ENCODE measurements at regions of chr7 and their contacts with region 1.

Region 1: GRCh38 chr7:86926732-86927131 is 132.7 kb downstream of the ELAPOR2 start:
- DNase-seq: peak; percentile 24
- ATAC-seq: peak; percentile 67
- H3K4me3 ChIP-seq: no peak overlapping the region
- H3K27ac ChIP-seq: no peak overlapping the region
- H3K4me1 ChIP-seq: no peaks in the 10 kb centered on the region
- H3K27me3 ChIP-seq: no peaks in the 10 kb centered on the region
- CTCF ChIP-seq: peak; percentile 57 to 84 (median 69)
- POLR2A ChIP-seq: no peak
- RAD21 ChIP-seq: peak; percentile 72

Region 2: DNA sequence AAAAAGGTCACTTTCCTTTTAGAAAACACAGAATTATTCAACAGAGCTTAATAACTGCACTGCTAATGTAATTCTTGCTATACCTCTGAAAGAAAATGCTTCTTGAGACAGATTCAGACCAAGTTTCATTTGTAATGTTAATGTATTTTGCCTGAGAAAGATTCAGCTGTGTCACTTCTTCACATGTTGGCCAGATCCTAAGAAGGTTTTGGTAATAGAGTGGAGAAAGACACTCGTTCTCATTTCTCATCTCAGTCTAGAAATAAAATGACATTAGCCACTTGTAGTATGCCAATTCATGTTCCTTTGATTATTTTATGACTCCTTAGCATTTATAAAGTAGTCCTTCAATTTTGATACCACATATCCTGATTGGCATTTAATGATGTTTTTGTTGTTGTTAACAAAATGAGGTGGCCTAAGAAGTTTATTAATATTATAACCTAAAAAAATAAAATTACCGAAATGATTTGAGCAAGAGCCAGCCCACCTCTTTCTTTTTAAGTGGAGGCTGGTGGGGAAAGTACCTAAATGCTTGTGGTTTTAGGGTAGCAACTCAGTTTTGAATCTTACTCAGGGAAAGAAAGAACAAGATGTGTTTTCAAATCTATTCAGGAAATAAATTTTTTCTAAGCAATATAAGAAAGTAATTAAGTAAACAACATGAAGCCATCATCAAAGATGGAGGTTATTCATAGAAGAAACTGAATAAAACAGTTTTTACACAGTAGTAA is 149.1 kb after region 1 on chr7:
- CTCF ChIA-PET with region 1: no interaction called
- POLR2A ChIA-PET with region 1: no interaction called
- RAD21 ChIA-PET with region 1: no interaction called
- intact Hi-C with region 1: loop called (anchors 5 kb)
- DNase-seq: no peak
- ATAC-seq: no peak
- H3K4me3 ChIP-seq: no peak overlapping the region
- H3K27ac ChIP-seq: no peak overlapping the region
- H3K4me1 ChIP-seq: no peaks in the 10 kb centered on the region
- H3K27me3 ChIP-seq: no peaks in the 10 kb centered on the region
- CTCF ChIP-seq: no peak
- POLR2A ChIP-seq: no peak
- RAD21 ChIP-seq: no peak

Region 3: GRCh38 chr7:87219545-87220025 is 292.9 kb after region 1 on chr7 and contains the start of gene TMEM243:
- CTCF ChIA-PET with region 1: no interaction called
- POLR2A ChIA-PET with region 1: no interaction called
- RAD21 ChIA-PET with region 1: no interaction called
- intact Hi-C with region 1: loop called (anchors 5 kb)
- DNase-seq: no peak
- ATAC-seq: peak; percentile 65
- H3K4me3 ChIP-seq: peak within 1 kb of the TSS; percentile 85 to 92
- H3K27ac ChIP-seq: peak within 1 kb of the TSS; percentile 75
- H3K4me1 ChIP-seq: peaks cover 0 to 19% of the 10 kb centered on the region in 2 experiments; a peak in 3 of 4 replicates
- H3K27me3 ChIP-seq: no peaks in the 10 kb centered on the region
- CTCF ChIP-seq: peak in 2 of 3 experiments; percentile 11 to 16; a peak in 1 of 6 replicates
- POLR2A ChIP-seq: no peak
- RAD21 ChIP-seq: no peak
- total RNA-seq, gene TMEM243: 23.3 TPM

Measured in HCT116 (cell line).